ENCODE measurements at regions of chr1 and their contacts with region 1.

Region 1: DNA sequence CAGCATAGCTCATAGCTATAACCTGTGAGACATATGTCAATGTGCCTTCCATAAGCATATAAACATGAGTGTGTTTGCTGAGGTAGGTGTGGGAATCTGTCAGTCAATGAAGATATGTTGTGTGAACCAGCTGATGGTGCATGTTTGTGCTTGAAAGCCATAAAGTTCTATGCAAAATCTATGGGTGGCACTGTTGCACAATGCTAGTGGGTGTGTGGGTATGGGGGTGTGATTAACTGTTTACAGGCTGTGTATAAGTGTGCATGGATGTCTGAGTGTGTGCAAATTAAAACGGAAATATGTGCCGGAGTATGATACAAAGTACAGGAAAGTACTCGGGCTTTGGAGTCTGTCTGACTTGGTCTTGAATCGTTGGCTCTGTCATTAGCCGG is 1.0 kb upstream of the ATP2B4 start:
- DNase-seq: no peak
- ATAC-seq: peak; percentile 38
- H3K4me3 ChIP-seq: no peak overlapping the region
- H3K27ac ChIP-seq: peak overlapping the region; percentile 91
- H3K4me1 ChIP-seq: peaks cover 24% of the 10 kb centered on the region
- H3K27me3 ChIP-seq: no peaks in the 10 kb centered on the region
- CTCF ChIP-seq: peak; percentile 49

Region 2: GRCh38 chr1:203504397-203505250 is 121.0 kb before region 1 on chr1:
- intact Hi-C with region 1: loop called (anchors 10 kb)
- DNase-seq: peak; percentile 84
- ATAC-seq: peak; percentile 91
- H3K4me3 ChIP-seq: no peak overlapping the region
- H3K27ac ChIP-seq: no peak overlapping the region
- H3K4me1 ChIP-seq: peaks cover 5% of the 10 kb centered on the region
- H3K27me3 ChIP-seq: no peaks in the 10 kb centered on the region
- CTCF ChIP-seq: peak; percentile 87

Region 3: DNA sequence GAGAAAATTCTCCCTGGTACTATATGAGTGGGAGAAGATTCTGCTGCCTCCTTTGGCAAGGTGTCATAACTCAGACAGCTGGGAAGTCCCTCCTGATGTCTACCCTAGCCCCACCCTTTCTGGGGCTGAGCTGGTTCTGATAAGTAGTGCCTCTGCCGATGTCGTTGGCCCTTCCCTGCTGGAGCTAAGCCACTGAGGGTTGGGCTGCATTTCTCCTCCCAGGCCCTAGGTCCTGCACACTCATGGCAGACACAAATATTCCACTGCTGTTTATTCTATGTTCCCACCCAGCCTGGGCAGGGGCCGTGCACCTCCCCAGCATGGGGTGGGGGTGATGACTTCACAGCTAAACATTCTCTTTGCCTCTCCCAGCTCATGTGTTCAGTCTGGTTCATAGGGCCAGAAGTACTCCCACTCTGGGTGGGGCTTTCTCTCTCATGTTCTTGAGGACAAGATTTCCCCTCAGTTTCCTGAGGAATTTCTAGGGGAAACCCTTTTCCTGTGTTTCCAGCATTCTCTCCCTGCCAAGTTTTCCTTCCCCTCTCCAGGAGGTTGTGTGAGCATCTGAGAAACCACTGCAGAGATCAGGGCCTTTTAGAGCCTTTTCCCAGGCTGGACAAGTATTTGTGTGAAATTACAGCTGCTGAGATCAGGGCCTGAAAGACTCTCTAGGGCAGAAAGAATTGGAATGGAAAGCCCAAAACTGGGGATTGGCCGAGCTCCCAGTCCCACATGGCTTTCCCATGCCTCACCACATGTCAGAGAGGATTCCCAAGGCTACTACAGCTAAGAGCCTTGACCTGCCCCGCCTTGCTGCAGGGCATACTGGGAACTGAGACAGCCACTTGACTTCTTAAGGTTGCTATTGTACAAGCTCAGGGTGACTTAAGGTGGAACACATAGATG is 67.2 kb after region 1 on chr1:
- intact Hi-C with region 1: loop called (anchors 5 kb)
- DNase-seq: peak; percentile 79
- ATAC-seq: peak; percentile 91
- H3K4me3 ChIP-seq: no peak overlapping the region
- H3K27ac ChIP-seq: peak overlapping the region; percentile 78
- H3K4me1 ChIP-seq: peaks cover 30% of the 10 kb centered on the region
- H3K27me3 ChIP-seq: no peaks in the 10 kb centered on the region
- CTCF ChIP-seq: no peak